ENCODE measurements at regions of chr9 and their contacts with region 1.

Region 1: GRCh38 chr9:126490871-126491567 is 122.7 kb upstream of the LMX1B start:
- DNase-seq: no peak
- ATAC-seq: peak; percentile 77
- H3K4me3 ChIP-seq: no peak overlapping the region
- H3K27ac ChIP-seq: no peak overlapping the region
- H3K4me1 ChIP-seq: no peaks in the 10 kb centered on the region
- H3K27me3 ChIP-seq: no peaks in the 10 kb centered on the region
- CTCF ChIP-seq: peak; percentile 93

Region 2: GRCh38 chr9:126317513-126317912 is 173.5 kb before region 1 on chr9:
- intact Hi-C with region 1: loop called (anchors 10 kb)
- DNase-seq: no peak
- ATAC-seq: peak; percentile 87
- H3K4me3 ChIP-seq: no peak overlapping the region
- H3K27ac ChIP-seq: no peak overlapping the region
- H3K4me1 ChIP-seq: peaks cover 4% of the 10 kb centered on the region
- H3K27me3 ChIP-seq: no peaks in the 10 kb centered on the region
- CTCF ChIP-seq: peak; percentile 53